ENCODE measurements at regions of chr2 and their contacts with region 1.

Region 1: DNA sequence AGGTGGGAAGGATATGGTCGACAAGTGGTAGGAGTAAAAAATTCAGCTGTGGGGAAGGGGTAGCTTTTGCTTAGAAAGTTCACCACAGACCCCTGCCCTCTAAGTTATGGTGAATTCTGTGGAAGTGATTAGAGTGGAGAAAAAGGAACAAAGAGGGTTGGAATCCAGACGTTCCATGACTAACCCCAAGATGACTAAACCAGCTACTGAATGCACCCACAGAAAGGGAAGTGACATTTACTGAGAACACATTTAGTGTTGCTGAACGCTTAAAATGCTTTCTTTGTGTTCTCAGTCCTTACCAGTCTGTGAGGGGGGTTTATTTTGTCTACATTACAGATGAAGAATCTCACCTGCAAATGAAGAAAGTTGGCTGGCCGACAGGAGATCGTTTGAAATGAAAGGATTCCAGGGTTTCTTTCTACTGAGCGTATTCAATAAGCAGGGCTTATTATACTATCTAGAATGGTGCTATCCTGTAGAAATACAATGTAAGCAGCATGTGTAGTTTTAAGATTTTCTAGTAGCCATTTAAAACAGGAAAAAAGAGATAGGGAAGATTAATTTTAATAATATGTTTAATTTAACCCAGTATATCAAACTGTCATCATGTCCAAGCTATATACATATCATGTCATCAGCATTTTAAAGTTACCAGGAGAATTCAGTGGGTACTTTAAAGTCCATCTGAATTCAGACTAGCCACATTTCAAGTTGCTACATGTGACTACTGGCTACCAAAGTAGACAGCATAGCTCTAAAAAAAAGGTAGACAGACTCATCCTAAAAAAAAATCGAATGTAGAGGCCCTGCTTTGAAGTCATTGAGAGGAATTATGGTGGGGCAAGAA is 60.1 kb downstream of the LIMS1 start:
- DNase-seq: peak; percentile 91
- H3K4me3 ChIP-seq: peak overlapping the region in 1 of 3 experiments; percentile 48
- H3K27ac ChIP-seq: peak overlapping the region; percentile 99
- H3K4me1 ChIP-seq: peaks cover 59% of the 10 kb centered on the region
- H3K27me3 ChIP-seq: no peaks in the 10 kb centered on the region
- CTCF ChIP-seq: no peak
- POLR2A ChIP-seq: peak; percentile 79

Region 2: GRCh38 chr2:108533832-108534583 is 60.3 kb before region 1 on chr2 and contains the start of gene LIMS1:
- CTCF ChIA-PET with region 1: interaction called, 4 read pairs
- POLR2A ChIA-PET with region 1: interaction called, 3 read pairs
- dilution Hi-C with region 1: no loop called
- intact Hi-C with region 1: loop called (anchors 2 kb)
- DNase-seq: peak; percentile 90
- H3K4me3 ChIP-seq: peak within 1 kb of the TSS; percentile 65 to 84 (median 74)
- H3K27ac ChIP-seq: peak within 1 kb of the TSS; percentile 86
- H3K4me1 ChIP-seq: peaks cover 15% of the 10 kb centered on the region
- H3K27me3 ChIP-seq: no peaks in the 10 kb centered on the region
- CTCF ChIP-seq: no peak
- POLR2A ChIP-seq: peak; percentile 83
- total RNA-seq, gene LIMS1: 153 and 166 TPM in 2 replicates

Measured in endothelial cell of umbilical vein (primary cell).